ENCODE measurements at regions of chr1 and their contacts with region 1.

Region 1: DNA sequence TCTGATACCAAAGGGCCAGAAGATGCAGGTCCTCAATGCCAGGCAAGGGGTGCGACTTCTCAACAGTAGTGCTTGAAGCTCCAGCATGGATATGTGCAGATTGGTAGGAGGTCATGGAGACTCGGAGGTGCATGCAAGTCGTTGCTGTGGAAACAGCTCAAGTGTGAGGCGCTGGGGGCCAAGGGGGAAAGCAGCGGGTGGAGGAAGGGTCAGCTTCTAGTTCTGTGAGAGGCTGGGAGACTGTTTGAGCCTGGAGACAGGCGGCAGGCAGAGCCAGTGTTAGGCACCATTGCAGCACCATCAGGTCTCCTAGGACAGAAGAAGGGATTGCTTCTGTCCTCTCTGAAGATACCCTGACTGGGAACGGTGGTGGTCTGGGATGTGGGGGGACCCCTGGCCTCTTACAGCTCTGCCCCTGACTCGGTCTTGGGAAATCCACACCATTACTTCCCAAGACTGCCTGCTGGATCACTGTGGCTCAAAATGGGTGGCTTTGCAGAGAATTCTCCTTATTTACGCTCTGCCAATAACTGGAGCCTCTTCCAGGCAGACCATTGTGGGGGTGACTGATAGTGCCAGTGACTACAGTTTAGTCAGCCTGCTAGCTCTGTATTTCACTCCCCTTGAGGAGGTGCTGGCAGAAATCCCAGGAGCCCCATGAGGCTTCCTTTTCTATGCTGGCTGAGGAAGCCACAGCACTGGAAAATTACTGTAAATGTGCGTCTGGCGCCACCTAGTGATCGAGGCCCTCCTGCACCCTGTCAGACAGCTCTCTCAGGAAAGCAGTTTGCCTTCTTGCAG is 46.3 kb upstream of the VANGL1 start:
- DNase-seq: no peak
- H3K4me3 ChIP-seq: no peak overlapping the region
- H3K27ac ChIP-seq: no peak overlapping the region
- H3K4me1 ChIP-seq: peaks cover 4 to 14% (median 6%) of the 10 kb centered on the region in 4 donors
- H3K27me3 ChIP-seq: no peaks in the 10 kb centered on the region
- CTCF ChIP-seq: peak; percentile 86 to 93 (median 87)
- EP300 ChIP-seq: no peak
- POLR2A ChIP-seq: no peak

Region 2: GRCh38 chr1:114986286-114986685 is 609.2 kb before region 1 on chr1:
- intact Hi-C with region 1: loop called (anchors 10 kb)
- DNase-seq: no peak
- H3K4me3 ChIP-seq: no peak overlapping the region
- H3K27ac ChIP-seq: no peak overlapping the region
- H3K4me1 ChIP-seq: no peaks in the 10 kb centered on the region
- H3K27me3 ChIP-seq: no peaks in the 10 kb centered on the region
- CTCF ChIP-seq: no peak
- EP300 ChIP-seq: no peak
- POLR2A ChIP-seq: no peak

Region 3: DNA sequence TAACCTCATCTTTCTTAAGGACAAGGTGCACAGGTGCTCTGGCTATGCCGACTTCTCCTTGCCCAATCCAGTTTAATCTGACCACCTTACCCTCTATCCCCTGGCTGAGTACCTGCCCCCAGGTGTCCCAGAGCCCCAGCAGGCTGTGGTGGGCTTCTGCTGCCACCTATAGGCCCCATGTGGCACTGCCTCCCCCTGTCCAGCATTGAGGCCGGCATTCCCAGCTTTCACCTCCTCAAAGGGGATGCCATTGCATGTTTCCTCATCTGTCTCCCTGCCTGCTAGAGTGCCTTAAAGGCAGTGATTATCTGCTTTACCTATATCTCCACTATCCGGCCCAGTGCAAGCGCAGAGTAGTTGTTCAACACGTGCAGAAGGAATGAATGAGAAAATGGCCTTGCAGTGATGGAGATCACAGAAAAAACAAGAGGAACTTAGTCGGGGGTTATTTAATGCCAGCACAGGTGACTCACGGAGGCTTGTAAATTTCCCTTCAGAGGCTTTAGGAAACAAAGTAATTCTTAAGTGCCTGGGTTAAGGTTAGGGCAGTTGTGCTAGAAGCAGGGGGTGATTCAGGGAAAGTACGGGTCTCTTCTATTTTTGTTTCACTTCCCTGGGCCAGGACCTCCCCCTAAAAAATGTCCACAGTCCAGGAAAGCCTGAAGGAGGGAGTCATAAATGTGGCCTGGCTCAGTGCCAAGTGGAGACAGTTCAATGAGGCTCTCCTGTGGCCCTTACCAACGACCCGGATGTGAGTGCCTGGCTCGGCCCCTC is 125.6 kb before region 1 on chr1:
- intact Hi-C with region 1: loop called (anchors 5 kb)
- DNase-seq: no peak
- H3K4me3 ChIP-seq: no peak overlapping the region
- H3K27ac ChIP-seq: no peak overlapping the region
- H3K4me1 ChIP-seq: no peaks in the 10 kb centered on the region
- H3K27me3 ChIP-seq: no peaks in the 10 kb centered on the region
- CTCF ChIP-seq: peak; percentile 70 to 89 (median 82)
- EP300 ChIP-seq: no peak
- POLR2A ChIP-seq: no peak